Naive thymus-derived CD4-positive, alpha-beta T cell (primary cell): ENCODE measurements at regions of chr10 and their contacts with region 1.

Region 1: DNA sequence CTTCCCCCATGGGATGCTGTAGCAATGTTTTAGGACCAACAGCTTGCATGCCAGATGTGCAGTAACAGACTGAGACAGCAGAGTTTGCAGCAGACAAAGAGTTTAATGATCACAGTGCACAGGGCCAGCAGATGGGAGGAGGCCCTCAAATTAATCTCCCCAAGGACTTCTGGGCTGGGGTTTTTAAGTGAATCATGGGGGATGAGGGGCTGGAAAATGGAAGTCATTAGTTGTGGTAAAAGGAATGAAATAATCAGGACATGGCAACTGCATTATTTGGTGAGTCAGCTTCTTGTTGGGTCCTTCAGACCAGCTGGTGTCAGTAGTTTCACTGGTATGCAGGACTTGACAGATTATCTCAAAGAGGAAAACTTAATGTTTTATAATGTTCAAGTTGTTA is 12.6 kb upstream of the NRBF2 start:
- DNase-seq: no peak
- ATAC-seq: no peak
- H3K4me3 ChIP-seq: no peak overlapping the region
- H3K4me3 Mint-ChIP-seq: no peak overlapping the region
- H3K27ac ChIP-seq: no peak overlapping the region
- H3K27ac Mint-ChIP-seq: no peak overlapping the region
- H3K4me1 ChIP-seq: no peaks in the 10 kb centered on the region
- H3K4me1 Mint-ChIP-seq: no peaks in the 10 kb centered on the region
- H3K27me3 ChIP-seq: no peaks in the 10 kb centered on the region
- H3K27me3 Mint-ChIP-seq: peaks cover 0 to 5% (median 3%) of the 10 kb centered on the region in 5 donors

Region 2: DNA sequence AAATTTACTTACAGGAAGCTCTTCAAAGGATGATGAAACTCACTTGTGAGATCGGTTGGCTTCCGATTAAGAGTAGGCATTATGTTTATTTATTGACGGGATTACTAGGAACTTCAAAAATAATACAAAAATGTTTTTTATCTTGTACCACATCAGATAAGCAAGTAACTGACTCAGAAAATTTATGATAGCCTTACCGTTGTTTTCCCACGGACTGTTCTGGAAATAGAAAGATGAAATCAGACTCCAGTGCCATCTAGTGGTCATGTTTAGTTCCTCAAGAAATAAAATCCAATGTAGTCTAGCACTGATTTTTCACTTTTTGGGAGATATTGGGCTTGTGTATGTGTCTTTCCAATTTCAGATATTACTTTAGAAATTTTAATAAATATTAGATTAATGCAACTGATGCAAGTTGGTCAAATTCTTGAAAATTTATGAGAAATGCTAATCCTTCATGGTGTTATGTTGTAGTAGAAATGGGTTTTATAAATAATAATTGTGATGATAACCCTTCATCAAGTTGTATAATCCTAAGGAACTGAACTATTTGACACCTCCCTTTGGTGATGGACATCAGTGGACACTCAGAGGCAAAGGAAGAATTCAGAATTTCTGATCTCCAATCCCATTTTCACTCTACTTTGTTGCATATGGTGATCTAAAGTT is 1836.2 kb before region 1 on chr10:
- CTCF ChIA-PET with region 1: no interaction called
- POLR2A ChIA-PET with region 1: no interaction called
- intact Hi-C with region 1: no loop called
- DNase-seq: peak in 6 of 9 donors; percentile 7 to 43 (median 26)
- ATAC-seq: peak; percentile 45
- H3K4me3 ChIP-seq: no peak overlapping the region
- H3K4me3 Mint-ChIP-seq: peak overlapping the region in 9 of 10 donors; percentile 12 to 81 (median 66)
- H3K27ac ChIP-seq: no peak overlapping the region
- H3K27ac Mint-ChIP-seq: peak overlapping the region in 1 of 9 donors; percentile 7
- H3K4me1 ChIP-seq: peaks cover 9 to 12% of the 10 kb centered on the region in 2 donors
- H3K4me1 Mint-ChIP-seq: peaks cover 13 to 24% (median 20%) of the 10 kb centered on the region in 7 donors
- H3K27me3 ChIP-seq: no peaks in the 10 kb centered on the region
- H3K27me3 Mint-ChIP-seq: peaks cover 0 to 22% (median 0%) of the 10 kb centered on the region in 5 donors

Region 3: GRCh38 chr10:63140077-63140476 is 19.5 kb after region 1 on chr10:
- CTCF ChIA-PET with region 1: no interaction called
- POLR2A ChIA-PET with region 1: no interaction called
- intact Hi-C with region 1: loop called in 1 of 2 experiments (anchors 2 kb)
- DNase-seq: no peak
- ATAC-seq: no peak
- H3K4me3 ChIP-seq: no peak overlapping the region
- H3K4me3 Mint-ChIP-seq: peak overlapping the region in 1 of 10 donors; percentile 8
- H3K27ac ChIP-seq: no peak overlapping the region
- H3K27ac Mint-ChIP-seq: no peak overlapping the region
- H3K4me1 ChIP-seq: peaks cover 0 to 14% of the 10 kb centered on the region in 2 donors
- H3K4me1 Mint-ChIP-seq: peaks cover 32 to 91% (median 66%) of the 10 kb centered on the region in 7 donors
- H3K27me3 ChIP-seq: no peaks in the 10 kb centered on the region
- H3K27me3 Mint-ChIP-seq: no peaks in the 10 kb centered on the region